ENCODE measurements at regions of chr2 and their contacts with region 1.

Region 1: DNA sequence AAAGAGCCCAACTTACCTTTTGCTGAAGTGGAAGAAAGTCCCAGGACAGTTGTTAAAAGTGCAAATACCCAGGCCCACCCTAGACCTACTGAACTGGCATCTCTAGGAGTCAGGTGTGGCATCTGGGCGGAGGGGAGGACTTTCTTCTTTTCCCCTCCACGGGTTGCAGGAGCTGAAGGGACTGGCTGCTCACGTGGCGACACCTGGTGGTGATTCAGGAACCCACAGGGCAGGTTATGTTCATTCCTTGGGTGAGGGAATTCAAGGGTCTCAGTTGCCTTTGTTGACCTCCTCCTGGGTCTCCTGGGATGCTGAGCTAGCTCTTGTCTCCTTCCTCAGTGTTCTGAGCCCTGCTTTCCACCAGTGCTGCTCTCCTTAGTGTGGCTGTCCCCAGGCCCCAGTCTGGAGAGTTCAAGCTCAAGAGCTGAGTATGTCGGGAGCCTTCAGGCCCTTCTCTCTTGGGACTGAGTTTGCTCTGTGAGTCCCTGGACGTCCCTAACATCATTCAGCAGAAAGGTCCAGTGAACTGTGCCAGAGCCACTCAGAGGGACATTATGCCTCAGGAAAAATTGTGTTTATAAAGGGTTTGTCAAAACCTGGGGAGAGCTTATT is 56.9 kb downstream of the DYSF start:
- DNase-seq: peak; percentile 43
- H3K4me3 Mint-ChIP-seq: no peak overlapping the region
- H3K27ac Mint-ChIP-seq: no peak overlapping the region
- H3K4me1 Mint-ChIP-seq: no peaks in the 10 kb centered on the region
- H3K27me3 Mint-ChIP-seq: peaks cover 2% of the 10 kb centered on the region

Region 2: GRCh38 chr2:71157124-71157793 is 353.0 kb before region 1 on chr2:
- intact Hi-C with region 1: loop called (anchors 5 kb)
- DNase-seq: peak; percentile 22
- H3K4me3 Mint-ChIP-seq: no peak overlapping the region
- H3K27ac Mint-ChIP-seq: no peak overlapping the region
- H3K4me1 Mint-ChIP-seq: no peaks in the 10 kb centered on the region
- H3K27me3 Mint-ChIP-seq: peaks cover 5% of the 10 kb centered on the region

Region 3: GRCh38 chr2:71299507-71299906 is 210.8 kb before region 1 on chr2:
- intact Hi-C with region 1: loop called (anchors 1 kb)
- DNase-seq: no peak
- H3K4me3 Mint-ChIP-seq: no peak overlapping the region
- H3K27ac Mint-ChIP-seq: no peak overlapping the region
- H3K4me1 Mint-ChIP-seq: no peaks in the 10 kb centered on the region
- H3K27me3 Mint-ChIP-seq: peaks cover 3% of the 10 kb centered on the region

Region 4: GRCh38 chr2:71447280-71447679 is 63.0 kb before region 1 on chr2:
- intact Hi-C with region 1: no loop called
- DNase-seq: no peak
- H3K4me3 Mint-ChIP-seq: no peak overlapping the region
- H3K27ac Mint-ChIP-seq: no peak overlapping the region
- H3K4me1 Mint-ChIP-seq: peaks cover under 1% of the 10 kb centered on the region
- H3K27me3 Mint-ChIP-seq: peaks cover 17% of the 10 kb centered on the region

Region 5: DNA sequence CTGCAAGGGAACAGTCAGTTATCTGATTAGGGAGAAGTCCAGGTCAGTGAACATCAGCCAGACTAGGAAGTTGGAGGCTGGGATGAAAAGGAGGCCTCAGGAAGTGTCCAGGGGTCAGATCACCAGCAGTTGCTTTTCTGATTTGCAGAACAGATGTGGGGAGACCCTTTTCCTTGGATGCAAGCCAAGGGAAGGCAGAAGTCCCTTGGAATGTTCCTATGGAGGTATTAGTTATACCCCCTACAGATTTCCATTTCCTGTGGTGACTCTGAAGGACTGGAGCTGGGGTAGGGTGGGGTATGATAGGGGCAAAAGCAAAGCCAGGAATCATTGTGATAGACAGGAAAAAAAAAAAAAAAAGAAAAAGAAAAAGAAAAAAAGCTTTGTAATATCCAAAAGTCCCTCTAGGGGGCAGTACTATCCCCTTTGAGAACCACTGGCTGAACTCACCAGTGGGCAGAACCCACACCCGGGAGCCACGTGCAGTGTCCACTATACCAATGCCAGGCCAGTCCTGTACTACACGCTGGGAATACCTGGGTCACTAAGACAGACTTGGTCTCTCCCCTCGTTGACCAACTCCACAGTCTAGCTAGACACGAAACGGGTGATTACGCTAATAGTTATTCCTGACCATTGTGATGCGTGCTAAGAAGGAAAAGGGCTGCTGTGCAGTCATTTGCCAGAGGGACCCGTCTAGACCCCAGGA is 49.6 kb before region 1 on chr2:
- intact Hi-C with region 1: loop called (anchors 2 kb)
- DNase-seq: no peak
- H3K4me3 Mint-ChIP-seq: no peak overlapping the region
- H3K27ac Mint-ChIP-seq: no peak overlapping the region
- H3K4me1 Mint-ChIP-seq: no peaks in the 10 kb centered on the region
- H3K27me3 Mint-ChIP-seq: peaks cover 7% of the 10 kb centered on the region

Measured in activated T-helper 2 cell treated with anti-CD3 and anti-CD28 coated beads, Interferon-gamma antibody, Interleukin-2, Interleukin-4, amounts not matched to agents 10 μg/mL and 5 μg/mL and 100 μg/mL, durations not matched to agents 14 hours and 24 hours and 36 hours (primary cell).